WTC11 (cell line): ENCODE measurements at regions of chr1 and their contacts with region 1.

Region 1: DNA sequence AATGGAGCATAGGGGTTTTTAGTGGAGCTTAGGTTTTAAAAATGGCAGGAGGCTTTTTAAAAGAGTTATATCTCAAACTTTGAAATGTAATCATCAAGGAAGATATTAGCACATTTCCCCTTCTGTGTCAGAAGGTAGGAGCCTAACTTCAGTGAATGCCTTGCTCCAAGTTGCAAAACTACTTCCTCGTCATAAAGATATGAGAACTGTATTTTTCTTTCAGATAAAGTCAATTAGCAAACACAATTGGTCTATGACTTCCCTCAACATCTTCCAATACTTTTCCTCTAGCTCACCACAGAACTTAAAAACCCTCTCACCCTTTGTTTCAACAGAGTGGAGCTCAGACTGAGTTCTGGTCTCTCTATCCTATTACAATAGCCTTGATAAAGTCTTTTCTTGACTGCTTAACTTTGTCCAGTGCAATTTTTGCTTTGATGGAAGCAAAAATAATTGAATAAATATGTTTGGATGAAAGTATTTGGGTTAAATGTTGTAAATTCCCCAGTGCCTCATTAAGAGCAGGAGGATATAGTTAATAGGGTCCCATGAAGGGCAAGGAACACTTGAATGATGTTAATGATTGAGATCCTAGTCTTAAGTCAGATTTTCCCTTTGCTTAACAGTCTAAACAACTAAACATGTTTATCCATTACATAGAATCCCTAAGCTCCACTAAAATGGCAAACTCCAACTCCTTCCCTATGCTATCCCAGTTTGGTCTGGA is 58.9 kb downstream of the TNFSF18 start:
- DNase-seq: no peak
- ATAC-seq: no peak
- H3K4me3 Mint-ChIP-seq: no peak overlapping the region
- H3K27ac Mint-ChIP-seq: no peak overlapping the region
- H3K4me1 Mint-ChIP-seq: peaks cover 16% of the 10 kb centered on the region
- H3K27me3 Mint-ChIP-seq: no peaks in the 10 kb centered on the region
- CTCF ChIP-seq: no peak

Region 2: DNA sequence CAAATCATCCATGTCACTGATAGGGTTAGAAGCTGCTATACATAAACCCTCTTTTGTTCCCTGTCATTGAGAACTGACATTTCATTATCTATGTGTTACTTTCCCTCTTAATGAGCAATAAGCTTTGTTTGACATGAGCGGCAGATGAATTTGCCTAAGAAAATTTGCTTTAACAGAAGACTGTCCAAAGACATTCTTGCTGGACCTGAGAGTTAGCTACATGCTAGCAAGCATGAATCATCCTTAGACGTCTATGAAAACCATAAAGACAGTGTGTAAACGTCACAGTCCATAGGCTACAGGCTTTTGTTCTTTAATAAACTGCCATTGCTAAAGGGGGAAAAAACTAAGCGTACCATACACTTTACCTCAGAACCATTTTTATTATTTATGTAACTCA is 142.2 kb after region 1 on chr1:
- CTCF ChIA-PET with region 1: no interaction called
- POLR2A ChIA-PET with region 1: no interaction called
- DNase-seq: no peak
- ATAC-seq: no peak
- H3K4me3 Mint-ChIP-seq: no peak overlapping the region
- H3K27ac Mint-ChIP-seq: no peak overlapping the region
- H3K4me1 Mint-ChIP-seq: peaks cover 4% of the 10 kb centered on the region
- H3K27me3 Mint-ChIP-seq: no peaks in the 10 kb centered on the region
- CTCF ChIP-seq: no peak

Region 3: DNA sequence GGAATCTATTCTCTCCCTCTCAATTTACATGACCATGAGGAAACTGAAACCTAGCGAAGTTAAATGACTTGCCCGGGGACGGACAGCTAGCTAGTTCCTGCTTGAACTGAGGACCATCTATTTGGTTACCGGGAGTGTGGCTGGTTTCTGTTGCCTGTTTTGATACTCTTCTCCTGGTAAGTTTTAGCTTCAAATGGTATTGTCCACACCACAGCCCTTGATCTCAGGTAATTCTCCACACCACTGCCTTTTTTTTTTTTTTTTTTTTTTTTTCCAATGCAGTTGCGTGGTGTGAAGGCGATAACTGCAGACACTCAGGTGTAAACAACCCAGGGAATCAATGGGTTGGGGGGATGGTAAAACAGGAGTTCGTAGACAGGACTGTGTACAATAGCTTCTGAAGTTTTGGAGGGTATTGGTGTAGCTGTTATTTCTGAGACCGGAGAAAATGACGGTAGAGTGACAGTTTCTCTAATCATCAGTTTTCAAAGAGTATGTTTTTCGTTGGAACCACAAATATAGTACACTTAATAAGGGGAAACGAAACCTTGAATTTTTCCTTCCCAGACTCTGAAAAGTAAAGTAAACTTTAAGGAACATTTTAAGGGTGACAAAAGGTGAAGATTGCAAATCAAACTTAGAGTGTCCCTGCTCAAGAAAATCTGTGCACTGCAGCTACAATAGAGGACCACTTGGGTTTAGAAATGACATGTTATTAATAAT is 1882.7 kb after region 1 on chr1:
- CTCF ChIA-PET with region 1: no interaction called
- POLR2A ChIA-PET with region 1: interaction called, 14 read pairs
- DNase-seq: peak; percentile 45
- ATAC-seq: peak; percentile 84
- H3K4me3 Mint-ChIP-seq: peak overlapping the region; percentile 93
- H3K27ac Mint-ChIP-seq: peak overlapping the region; percentile 99
- H3K4me1 Mint-ChIP-seq: peaks cover 61% of the 10 kb centered on the region
- H3K27me3 Mint-ChIP-seq: no peaks in the 10 kb centered on the region
- CTCF ChIP-seq: no peak